SK-N-SH (cell line): ENCODE measurements at regions of chr2 and their contacts with region 1.

Region 1: DNA sequence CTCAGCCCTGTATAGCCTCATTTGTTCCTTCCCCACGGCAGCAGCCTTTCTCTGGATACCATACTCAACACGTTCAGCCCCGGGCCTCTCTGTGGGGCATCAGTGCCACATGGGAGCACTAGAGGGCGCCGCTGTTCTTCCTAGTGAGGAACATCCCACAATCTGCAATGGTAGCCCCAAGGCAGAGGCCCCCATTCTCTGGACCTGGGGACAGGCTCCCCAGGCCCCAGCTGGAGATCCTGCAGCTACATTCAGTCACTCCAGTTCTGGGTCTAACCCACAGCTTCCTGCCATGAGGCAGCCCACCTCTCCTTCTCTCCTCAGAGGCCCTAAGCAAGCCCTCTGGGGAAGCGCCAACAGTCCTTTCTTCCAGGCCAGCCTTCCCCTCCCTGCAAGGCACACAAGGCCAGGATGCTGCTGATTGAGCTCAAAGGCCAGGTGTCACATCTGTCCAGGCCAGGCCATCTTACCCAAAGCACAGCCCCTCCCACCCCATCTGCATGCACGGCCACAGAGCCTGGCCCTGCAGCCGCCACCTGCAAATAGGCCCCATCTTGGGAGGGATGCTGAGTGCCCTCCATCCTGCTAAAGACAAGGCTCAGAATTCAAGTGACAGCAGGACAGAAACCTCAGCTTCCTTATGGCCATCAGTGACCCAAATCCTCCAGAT is 14.3 kb upstream of the SFXN5 start:
- DNase-seq: peak; percentile 88
- H3K4me3 ChIP-seq: peak overlapping the region in 1 of 2 experiments; percentile 46; a peak in 1 of 4 replicates
- H3K27ac ChIP-seq: no peak overlapping the region
- H3K4me1 ChIP-seq: peaks cover 2 to 22% of the 10 kb centered on the region in 2 experiments; a peak in 2 of 4 replicates
- H3K27me3 ChIP-seq: no peaks in the 10 kb centered on the region
- CTCF ChIP-seq: peak; percentile 97
- EP300 ChIP-seq: no peak
- RAD21 ChIP-seq: peak; percentile 96

Region 2: DNA sequence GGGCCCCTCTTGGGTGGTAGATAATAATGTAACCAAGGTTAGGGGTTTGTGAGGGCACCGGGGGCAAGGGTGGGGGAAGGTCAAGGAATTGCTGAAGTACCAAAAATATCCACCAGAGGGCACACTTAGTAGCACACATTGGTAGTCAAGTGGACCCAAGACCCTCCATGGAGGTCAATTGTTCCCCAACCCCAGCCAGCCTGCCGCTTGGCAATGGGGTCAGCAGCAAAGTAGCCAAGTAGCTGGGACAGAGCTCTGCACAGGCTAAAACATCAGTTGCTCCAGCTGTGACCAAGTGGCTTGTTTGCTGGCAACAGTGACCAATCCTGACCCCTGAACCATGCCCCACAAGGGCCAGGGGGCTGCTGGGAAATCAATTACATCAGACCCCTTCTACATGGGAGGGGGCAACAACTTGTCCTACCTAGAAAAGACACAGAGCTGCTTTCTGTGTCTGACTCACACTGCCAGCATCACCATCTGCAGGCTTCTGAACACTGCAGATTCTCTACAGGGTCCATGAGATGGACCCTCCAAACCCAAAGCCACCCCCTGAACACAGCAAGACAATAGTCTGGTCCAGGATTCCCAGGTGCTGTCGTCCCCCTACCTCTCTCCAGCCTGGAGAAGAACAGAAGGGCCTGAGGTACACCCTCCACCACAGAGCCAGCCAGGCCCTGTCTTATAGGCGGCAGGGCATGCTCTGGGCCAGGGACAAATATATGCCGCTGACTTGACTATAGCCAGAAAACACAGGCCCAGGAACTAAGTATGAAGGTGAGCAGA is 92.5 kb before region 1 on chr2:
- CTCF ChIA-PET with region 1: interaction called, 21 read pairs
- POLR2A ChIA-PET with region 1: no interaction called
- DNase-seq: peak; percentile 85
- H3K4me3 ChIP-seq: no peak overlapping the region; a peak in 1 of 4 replicates
- H3K27ac ChIP-seq: no peak overlapping the region
- H3K4me1 ChIP-seq: peaks cover 0 to 14% of the 10 kb centered on the region in 2 experiments; a peak in 1 of 4 replicates
- H3K27me3 ChIP-seq: no peaks in the 10 kb centered on the region
- CTCF ChIP-seq: peak; percentile 82
- EP300 ChIP-seq: no peak
- RAD21 ChIP-seq: peak; percentile 58

Region 3: DNA sequence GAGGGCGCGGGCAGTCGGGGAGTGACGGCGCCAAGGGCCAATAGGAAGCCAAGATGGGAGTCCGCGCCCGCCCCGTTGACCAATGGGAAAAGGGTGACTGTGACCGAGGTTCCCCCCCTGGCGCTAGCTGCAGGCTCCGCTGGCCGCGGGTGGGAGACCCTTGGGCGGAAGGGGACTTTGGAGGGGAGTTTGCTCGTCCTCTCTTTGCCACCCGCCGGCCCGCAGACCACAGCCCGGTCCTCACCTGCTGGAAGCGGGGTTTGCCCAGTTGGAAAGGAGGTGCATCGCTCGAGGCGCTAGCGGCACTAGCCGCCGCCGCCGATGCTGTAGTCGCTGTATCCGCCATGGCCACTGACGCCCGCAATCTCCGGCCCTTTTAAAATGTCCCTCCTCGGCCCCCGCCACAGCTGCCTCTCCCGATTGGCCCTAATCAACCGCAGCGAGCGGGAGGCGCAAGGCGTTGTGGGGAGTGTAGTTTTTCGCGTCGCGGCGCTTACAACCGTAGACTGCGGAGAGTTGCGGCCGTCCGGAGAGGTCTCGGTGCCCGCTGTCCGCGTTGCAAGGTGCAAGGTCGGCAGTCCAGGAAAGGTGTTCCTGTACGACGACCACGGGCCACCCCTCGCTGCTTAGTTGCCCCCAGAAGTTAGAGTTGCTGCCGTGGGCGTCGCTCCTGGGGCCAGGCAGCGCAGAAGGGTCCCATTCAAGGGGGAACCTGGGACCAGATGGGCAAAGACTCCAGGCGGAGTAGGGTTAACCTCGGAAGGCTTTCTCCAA is 14.3 kb before region 1 on chr2 and contains the start of gene SFXN5:
- CTCF ChIA-PET with region 1: interaction called, 39 read pairs
- POLR2A ChIA-PET with region 1: no interaction called
- DNase-seq: peak; percentile 99
- H3K4me3 ChIP-seq: peak within 1 kb of the TSS; percentile 92 to 98
- H3K27ac ChIP-seq: peak within 1 kb of the TSS; percentile 81 to 88
- H3K4me1 ChIP-seq: peaks cover 3 to 15% of the 10 kb centered on the region in 2 experiments; a peak in 2 of 4 replicates
- H3K27me3 ChIP-seq: no peaks in the 10 kb centered on the region
- CTCF ChIP-seq: peak; percentile 25
- EP300 ChIP-seq: no peak
- RAD21 ChIP-seq: no peak
- polyA plus RNA-seq, gene SFXN5: 9.9 and 11.0 TPM in 2 replicates

Region 4: DNA sequence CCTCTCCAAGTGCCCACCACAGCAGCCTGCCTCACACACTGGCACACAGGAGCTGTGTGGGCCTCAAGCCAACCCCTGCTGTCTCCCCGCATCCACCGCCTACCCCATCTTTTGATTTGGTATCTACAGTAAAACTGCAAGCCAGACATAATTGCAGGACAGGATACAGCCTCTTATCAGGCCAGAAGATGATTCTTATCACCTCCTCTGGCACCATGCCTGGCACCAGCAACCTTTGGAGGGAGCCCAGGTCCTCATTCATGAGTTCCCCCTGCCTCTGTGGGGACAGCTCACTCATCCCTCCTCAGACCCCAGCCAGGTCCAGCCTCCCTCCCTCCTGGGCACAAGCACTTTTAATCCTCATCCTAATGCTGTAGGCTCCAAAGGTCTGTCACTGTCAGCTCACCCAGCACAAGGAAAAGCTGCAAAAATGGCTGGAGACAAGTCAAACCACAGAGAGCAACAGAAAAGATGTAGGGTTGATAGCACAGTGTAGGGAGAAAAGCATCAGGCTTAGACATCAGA is 17.3 kb after region 1 on chr2:
- CTCF ChIA-PET with region 1: interaction called, 88 read pairs
- POLR2A ChIA-PET with region 1: interaction called, 3 read pairs
- DNase-seq: peak; percentile 86
- H3K4me3 ChIP-seq: no peak overlapping the region
- H3K27ac ChIP-seq: peak overlapping the region; percentile 46 to 81
- H3K4me1 ChIP-seq: peaks cover 19 to 39% of the 10 kb centered on the region in 2 experiments
- H3K27me3 ChIP-seq: no peaks in the 10 kb centered on the region
- CTCF ChIP-seq: no peak
- EP300 ChIP-seq: peak; percentile 46 to 93; a peak in 3 of 4 replicates
- RAD21 ChIP-seq: peak; percentile 20

Region 5: DNA sequence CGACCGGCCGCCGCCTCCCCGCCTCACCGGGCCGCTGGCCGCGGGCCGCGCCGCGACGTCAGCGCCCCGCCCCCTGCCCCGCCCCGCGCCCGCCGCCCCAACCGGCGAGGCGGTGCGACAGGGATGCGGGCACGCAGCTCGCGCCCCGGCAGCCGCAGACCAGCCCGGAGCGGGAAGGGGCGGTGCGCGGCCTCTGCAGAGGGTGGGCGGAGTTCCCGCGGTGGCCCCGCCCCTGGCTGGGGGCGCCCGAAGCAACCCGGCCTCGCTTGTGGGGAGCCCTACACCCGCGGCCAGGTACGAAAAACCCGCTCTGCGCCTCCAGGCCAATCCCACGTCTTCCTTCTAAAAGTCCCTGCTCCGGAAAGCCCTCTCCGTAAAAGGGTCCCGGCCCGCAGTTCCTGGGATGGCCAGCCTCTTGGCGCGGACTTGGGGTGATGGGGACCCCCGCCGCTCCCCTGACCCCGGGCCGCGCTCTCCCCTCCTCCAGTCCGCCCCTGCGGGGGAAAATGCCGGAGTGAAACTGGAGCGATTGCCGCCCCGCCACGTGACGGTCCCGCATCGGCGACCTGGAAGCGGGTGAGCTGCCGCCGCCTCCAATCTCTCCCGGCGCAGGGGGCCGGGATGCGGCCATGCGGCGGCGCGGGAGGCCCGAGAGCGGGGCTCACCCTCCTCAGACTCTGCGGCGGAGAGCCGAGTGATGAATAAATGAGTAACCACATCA is 27.2 kb after region 1 on chr2 and contains the start of gene RAB11FIP5:
- CTCF ChIA-PET with region 1: interaction called, 88 read pairs
- POLR2A ChIA-PET with region 1: no interaction called
- DNase-seq: peak; percentile 95
- H3K4me3 ChIP-seq: peak within 1 kb of the TSS; percentile 85 to 89
- H3K27ac ChIP-seq: peak within 1 kb of the TSS; percentile 80 to 98
- H3K4me1 ChIP-seq: peaks cover 14 to 34% of the 10 kb centered on the region in 2 experiments
- H3K27me3 ChIP-seq: no peaks in the 10 kb centered on the region
- CTCF ChIP-seq: no peak
- EP300 ChIP-seq: peak in 1 of 2 experiments; percentile 29; a peak in 1 of 4 replicates
- RAD21 ChIP-seq: no peak
- polyA plus RNA-seq, gene RAB11FIP5: 16.4 and 17.1 TPM in 2 replicates

Region 6: GRCh38 chr2:73163483-73164367 is 77.9 kb after region 1 on chr2:
- CTCF ChIA-PET with region 1: interaction called, 267 read pairs
- POLR2A ChIA-PET with region 1: no interaction called
- DNase-seq: peak; percentile 88
- H3K4me3 ChIP-seq: no peak overlapping the region; a peak in 1 of 4 replicates
- H3K27ac ChIP-seq: no peak overlapping the region
- H3K4me1 ChIP-seq: no peaks in the 10 kb centered on the region
- H3K27me3 ChIP-seq: no peaks in the 10 kb centered on the region
- CTCF ChIP-seq: peak; percentile 87
- EP300 ChIP-seq: no peak
- RAD21 ChIP-seq: peak; percentile 90